Gastrocnemius medialis (tissue), 4 donors: ENCODE measurements at regions of chr9 and their contacts with region 1.

Region 1: GRCh38 chr9:7676609-7677156 is 122.9 kb downstream of the DMAC1 start:
- DNase-seq: no peak
- ATAC-seq: no peak
- H3K4me3 ChIP-seq: no peak overlapping the region
- H3K27ac ChIP-seq: no peak overlapping the region
- H3K4me1 ChIP-seq: no peaks in the 10 kb centered on the region
- H3K27me3 ChIP-seq: no peaks in the 10 kb centered on the region
- CTCF ChIP-seq: no peak
- POLR2A ChIP-seq: no peak

Region 2: GRCh38 chr9:7592321-7593316 is 84.1 kb before region 1 on chr9:
- in situ Hi-C with region 1: loop called in 1 of 4 experiments (anchors 25 kb)
- intact Hi-C with region 1: no loop called
- DNase-seq: no peak
- ATAC-seq: no peak
- H3K4me3 ChIP-seq: no peak overlapping the region
- H3K27ac ChIP-seq: no peak overlapping the region
- H3K4me1 ChIP-seq: no peaks in the 10 kb centered on the region
- H3K27me3 ChIP-seq: no peaks in the 10 kb centered on the region
- CTCF ChIP-seq: no peak
- POLR2A ChIP-seq: no peak

Region 3: DNA sequence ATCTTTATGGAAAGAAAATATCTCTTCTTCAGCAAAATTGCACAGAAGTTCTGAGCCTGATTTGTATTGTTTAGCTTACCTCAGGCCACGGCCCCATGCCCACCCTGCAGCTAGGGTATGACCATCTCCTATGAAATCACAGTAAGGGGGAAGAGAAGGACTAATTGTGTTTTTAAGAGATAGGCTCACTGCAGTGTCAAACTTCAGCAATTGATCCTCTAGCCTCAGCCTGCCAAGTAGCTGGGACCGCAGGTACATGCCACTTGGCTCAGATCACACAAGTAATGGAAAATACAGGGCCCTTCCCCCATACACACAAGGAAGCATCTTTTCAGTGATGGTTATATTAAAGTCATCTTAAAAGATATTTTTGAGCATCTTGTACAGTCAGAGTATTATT is 62.9 kb after region 1 on chr9:
- in situ Hi-C with region 1: no loop called
- intact Hi-C with region 1: no loop called
- DNase-seq: no peak
- ATAC-seq: no peak
- H3K4me3 ChIP-seq: no peak overlapping the region
- H3K27ac ChIP-seq: no peak overlapping the region
- H3K4me1 ChIP-seq: no peaks in the 10 kb centered on the region
- H3K27me3 ChIP-seq: no peaks in the 10 kb centered on the region
- CTCF ChIP-seq: no peak
- POLR2A ChIP-seq: no peak

Region 4: GRCh38 chr9:7799234-7799943 is 122.7 kb after region 1 on chr9 and contains the start of gene DMAC1:
- in situ Hi-C with region 1: loop called in 1 of 4 experiments (anchors 25 kb)
- intact Hi-C with region 1: no loop called
- DNase-seq: peak; percentile 57 to 66
- ATAC-seq: peak; percentile 96 to 98
- H3K4me3 ChIP-seq: peak within 1 kb of the TSS; percentile 83 to 97 (median 90)
- H3K27ac ChIP-seq: peak within 1 kb of the TSS; percentile 92 to 96 (median 94)
- H3K4me1 ChIP-seq: peaks cover 14% of the 10 kb centered on the region in 2 donors
- H3K27me3 ChIP-seq: no peaks in the 10 kb centered on the region
- CTCF ChIP-seq: no peak
- POLR2A ChIP-seq: peak in 1 of 2 donors; percentile 40
- total RNA-seq, gene DMAC1: 15.6 to 23.4 (median 21.2) TPM